CD8-positive, alpha-beta T cell (primary cell): ENCODE measurements at regions of chr11 and their contacts with region 1.

Region 1: DNA sequence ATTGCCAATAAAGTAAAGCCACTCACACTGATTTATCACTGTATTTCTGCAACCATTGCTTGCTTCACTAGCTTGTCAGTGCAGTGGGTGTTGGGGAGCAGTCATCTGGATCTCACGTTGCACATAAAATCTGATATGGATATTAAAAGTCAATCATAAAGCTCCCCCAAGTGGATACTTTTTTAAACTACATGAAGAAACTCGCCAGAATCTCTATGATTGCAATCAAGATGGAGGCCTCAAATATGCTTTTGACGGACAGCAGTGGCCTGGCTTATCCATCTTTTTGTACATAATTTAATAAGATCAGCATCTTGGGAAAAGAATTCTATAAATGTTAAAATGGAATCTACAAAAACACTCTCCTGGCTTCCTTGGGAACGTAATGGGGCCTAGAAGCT is 137.7 kb downstream of the WT1 start:
- DNase-seq: peak in 2 of 9 experiments; percentile 10 to 29
- ATAC-seq: no peak
- H3K4me3 ChIP-seq: no peak overlapping the region
- H3K4me3 Mint-ChIP-seq: no peak overlapping the region
- H3K27ac ChIP-seq: no peak overlapping the region
- H3K27ac Mint-ChIP-seq: no peak overlapping the region
- H3K4me1 ChIP-seq: no peaks in the 10 kb centered on the region
- H3K4me1 Mint-ChIP-seq: no peaks in the 10 kb centered on the region
- H3K27me3 ChIP-seq: no peaks in the 10 kb centered on the region
- H3K27me3 Mint-ChIP-seq: peaks cover 5% of the 10 kb centered on the region
- CTCF ChIP-seq: peak; percentile 17

Region 2: GRCh38 chr11:31240338-31240904 is 1057.2 kb before region 1 on chr11:
- CTCF ChIA-PET with region 1: no interaction called
- POLR2A ChIA-PET with region 1: no interaction called
- intact Hi-C with region 1: loop called in 1 of 2 experiments (anchors 5 kb)
- DNase-seq: peak in 4 of 9 experiments; percentile 4 to 49 (median 22)
- ATAC-seq: no peak
- H3K4me3 ChIP-seq: no peak overlapping the region
- H3K4me3 Mint-ChIP-seq: no peak overlapping the region
- H3K27ac ChIP-seq: no peak overlapping the region
- H3K27ac Mint-ChIP-seq: no peak overlapping the region
- H3K4me1 ChIP-seq: no peaks in the 10 kb centered on the region
- H3K4me1 Mint-ChIP-seq: no peaks in the 10 kb centered on the region
- H3K27me3 ChIP-seq: no peaks in the 10 kb centered on the region
- H3K27me3 Mint-ChIP-seq: peaks cover 4% of the 10 kb centered on the region
- CTCF ChIP-seq: peak; percentile 58

Region 3: DNA sequence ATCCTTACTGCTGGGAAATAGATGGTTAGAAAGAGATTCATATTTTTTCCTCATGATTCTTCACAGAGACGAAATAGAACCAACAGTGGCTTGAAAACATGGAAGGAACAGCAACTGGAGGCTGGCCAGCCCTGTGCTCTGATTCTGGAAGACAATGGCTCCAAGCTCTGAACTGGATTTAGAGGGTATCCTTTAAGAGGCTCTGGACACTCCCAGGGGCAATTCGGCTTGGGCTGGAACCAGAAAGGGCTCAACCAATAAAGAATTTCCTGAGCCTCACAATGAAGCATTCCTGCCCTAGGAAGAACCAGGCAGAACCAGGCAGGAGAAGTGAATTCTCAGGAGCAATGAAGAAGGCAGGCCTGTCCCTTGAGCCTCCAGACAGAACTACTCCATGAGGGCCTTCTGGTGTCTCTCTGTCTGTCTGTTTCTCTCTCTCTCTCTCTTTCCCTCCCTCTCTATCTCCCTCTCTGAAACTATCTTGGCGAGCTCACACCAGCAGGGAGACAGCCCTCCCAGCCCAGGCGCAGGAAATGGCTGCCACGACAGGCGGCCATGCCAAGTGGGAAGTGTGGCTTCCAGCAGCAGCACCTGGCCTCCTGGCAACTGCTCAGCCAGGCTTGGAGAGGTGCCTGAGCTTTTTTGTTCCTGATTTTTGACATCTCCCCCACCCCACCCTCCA is 113.4 kb before region 1 on chr11:
- CTCF ChIA-PET with region 1: no interaction called
- POLR2A ChIA-PET with region 1: no interaction called
- intact Hi-C with region 1: no loop called
- DNase-seq: no peak
- ATAC-seq: no peak
- H3K4me3 ChIP-seq: no peak overlapping the region
- H3K4me3 Mint-ChIP-seq: no peak overlapping the region
- H3K27ac ChIP-seq: no peak overlapping the region
- H3K27ac Mint-ChIP-seq: no peak overlapping the region
- H3K4me1 ChIP-seq: no peaks in the 10 kb centered on the region
- H3K4me1 Mint-ChIP-seq: no peaks in the 10 kb centered on the region
- H3K27me3 ChIP-seq: no peaks in the 10 kb centered on the region
- H3K27me3 Mint-ChIP-seq: peaks cover 18% of the 10 kb centered on the region
- CTCF ChIP-seq: no peak